Cardiac septum (tissue), 1 donor: ENCODE measurements at regions of chr10 and their contacts with region 1.

Region 1: DNA sequence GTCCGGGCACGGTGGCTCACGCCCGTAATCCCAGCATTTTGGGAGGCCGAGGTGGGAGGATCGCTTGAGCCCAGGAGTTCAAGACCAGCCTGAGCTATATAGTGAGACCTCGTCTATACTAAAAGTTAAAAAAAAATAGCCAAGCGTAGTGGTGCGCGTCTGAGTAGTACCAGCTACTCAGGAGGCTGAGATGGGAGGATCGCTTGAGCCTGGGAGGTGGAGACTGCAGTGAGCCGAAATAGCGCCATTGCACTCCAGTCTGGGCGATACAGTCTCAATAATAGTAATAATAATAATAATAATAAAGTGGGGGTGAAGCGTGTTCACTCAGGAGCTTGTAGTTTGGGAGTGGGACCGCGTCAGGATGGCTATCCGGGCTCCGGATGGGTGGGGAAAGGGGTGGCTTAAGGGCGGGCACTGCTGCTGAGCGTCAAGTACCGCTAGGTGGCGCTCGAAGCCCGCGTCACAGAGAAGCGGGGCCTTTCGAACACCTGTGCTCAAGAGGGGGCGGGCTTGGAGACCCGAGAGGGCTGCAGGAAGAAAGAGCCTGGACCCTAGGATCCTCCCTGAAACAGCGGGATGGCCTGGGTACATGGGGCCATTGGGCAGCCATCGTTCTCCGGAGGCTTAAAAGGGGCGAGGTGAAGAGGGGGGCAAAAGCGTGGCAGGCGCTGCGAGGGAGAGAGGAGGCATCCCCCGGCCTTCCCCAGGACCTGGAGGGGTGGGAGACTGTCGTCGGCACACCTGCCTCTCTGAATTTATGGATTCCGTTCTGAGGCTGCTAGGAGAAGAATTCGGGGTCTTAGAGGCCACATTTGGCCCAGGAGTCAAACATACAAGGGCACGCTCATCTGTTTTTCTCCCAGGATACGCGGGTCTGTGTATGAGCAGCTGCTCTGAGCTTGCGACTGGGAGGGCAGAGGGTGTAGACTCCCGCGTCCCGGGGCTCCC is 14.5 kb downstream of the LBX1 start:
- DNase-seq: peak; percentile 86

Region 2: DNA sequence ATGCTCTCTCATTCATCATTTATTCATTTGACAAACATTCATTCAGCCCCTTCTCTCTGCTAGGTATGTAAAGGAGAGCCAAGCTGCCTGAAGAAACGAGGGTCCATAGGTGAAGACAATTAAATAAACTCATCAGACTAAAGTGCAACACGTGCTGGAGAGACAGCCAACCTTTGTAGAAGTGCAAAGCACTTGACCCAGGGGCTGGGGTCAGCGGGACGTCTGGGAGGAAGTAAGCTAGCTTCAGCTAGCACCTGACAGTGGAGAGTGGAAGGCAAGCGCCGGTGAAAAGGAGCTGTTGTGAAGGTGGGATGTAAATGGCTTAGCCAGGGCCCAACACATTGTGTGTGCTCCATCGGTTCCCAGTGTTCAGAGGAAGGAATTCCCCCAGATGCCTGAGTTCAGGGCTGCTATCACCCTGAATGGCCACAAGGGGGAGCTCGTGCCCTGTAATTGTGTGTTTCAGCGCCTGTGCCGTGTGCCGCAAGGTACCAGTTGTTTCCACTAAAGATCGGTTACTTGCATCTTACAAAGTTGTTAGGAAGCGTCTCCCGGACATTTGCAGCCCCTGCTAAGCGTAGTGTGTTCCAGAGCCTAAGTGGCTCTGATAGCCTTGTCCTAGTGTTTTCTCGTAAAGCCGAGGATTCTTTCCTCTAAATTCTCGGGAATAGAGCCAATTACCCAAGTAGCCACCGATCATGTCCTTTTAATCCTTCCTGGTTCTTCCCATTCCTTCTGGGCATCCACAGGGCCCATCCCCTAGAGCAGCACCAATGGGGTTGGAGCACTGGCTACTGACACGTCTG is 53.0 kb before region 1 on chr10:
- intact Hi-C with region 1: no loop called
- DNase-seq: peak; percentile 82

Region 3: GRCh38 chr10:101291331-101292193 is 76.8 kb after region 1 on chr10:
- intact Hi-C with region 1: loop called (anchors 5 kb)
- DNase-seq: no peak

Region 4: GRCh38 chr10:101358706-101359300 is 144.1 kb after region 1 on chr10:
- intact Hi-C with region 1: no loop called
- DNase-seq: no peak

Region 5: DNA sequence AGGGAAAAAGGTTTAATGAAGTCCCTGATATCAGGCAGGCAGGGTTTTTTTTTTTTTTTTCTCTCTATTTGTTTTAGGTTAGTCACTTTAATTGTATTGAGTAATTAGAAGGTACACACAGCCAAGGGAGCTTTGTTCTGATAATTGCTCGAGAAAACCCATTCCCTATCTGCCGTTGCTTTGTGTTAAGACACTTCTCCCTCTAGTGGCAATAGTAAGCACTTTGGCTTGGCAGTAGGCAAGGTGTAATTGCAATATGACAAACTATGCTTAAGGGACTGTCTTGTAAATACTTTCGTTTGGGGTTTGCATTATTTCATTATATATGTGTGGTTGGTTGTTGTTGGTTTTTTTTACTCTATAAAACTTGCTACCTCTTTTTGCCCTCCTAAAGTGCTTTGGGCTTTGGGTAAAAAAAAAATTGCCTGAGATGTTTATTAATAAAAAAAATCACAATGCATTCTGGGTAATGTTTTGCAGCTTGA is 252.6 kb after region 1 on chr10:
- intact Hi-C with region 1: loop called (anchors 5 kb)
- DNase-seq: no peak

Region 6: GRCh38 chr10:101569838-101570766 is 355.4 kb after region 1 on chr10:
- intact Hi-C with region 1: loop called (anchors 1 kb)
- DNase-seq: peak; percentile 90

Region 7: DNA sequence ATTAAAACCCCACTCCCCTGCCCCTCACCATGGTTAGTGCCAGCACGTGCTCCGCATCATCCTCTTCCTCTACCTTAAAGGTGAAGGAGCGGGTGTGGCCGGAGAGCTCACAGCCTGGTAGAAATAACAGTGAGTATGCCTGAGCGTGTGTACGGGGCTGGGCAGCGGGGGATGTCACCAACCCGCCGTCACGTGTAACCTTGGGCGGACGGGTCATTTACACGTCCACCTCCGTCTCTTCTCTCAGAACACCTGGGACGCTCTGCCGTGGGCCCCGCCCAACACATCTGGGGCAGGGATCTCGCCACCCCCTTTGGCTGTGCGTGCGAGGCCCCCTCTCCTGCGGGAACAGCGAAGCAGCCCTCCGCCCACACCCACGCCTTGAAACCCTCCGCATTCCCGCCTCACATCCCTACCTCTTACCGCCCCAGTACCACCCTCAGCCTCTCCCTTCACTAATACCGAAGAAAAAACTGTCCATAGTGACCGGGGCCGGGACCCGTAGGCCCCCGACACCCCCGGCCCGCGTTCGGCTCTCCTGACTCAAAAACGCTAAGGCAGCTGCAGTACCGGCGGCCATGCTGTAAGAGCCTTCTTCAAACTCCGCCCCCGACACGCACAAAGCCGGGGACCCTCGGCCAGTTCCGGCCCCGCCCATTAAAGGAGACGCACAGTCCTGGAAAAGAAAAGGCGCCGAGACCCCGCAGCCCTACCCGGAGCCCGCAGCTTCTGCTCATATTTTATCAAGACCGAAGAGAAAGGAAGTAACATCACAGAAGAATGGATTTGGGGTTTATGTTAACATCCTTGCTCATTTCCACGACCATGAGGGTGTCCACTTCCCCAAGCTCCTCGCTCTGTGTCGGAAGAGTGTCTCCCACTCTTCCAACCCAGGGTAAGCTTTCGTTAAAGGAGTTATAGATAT is 568.4 kb after region 1 on chr10 and contains the start of gene NPM3:
- intact Hi-C with region 1: loop called (anchors 5 kb)
- DNase-seq: peak; percentile 87
- total RNA-seq, gene NPM3: 8.9 TPM